CD4-positive, alpha-beta memory T cell (primary cell): ENCODE measurements at regions of chr1 and their contacts with region 1.

Region 1: DNA sequence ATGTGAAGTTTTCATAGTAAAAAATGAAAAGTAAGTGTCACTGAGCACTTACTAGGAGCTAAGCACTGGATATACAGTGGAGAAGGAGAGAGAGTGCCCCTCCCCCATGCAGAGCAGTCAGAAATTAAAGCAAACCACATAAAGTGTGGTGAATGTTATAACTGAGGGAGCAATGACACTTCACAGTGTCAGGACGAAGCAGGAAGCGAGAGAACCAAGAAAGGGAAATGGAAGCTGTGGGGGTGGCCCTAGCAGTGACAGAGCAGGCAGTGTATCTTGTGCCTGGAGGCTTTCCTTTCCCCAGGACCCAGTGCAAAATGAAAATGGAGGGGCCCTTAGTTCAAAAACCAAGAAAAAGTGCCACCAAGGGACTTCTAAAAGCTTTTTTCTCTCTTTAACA is 21.5 kb upstream of the RCAN3 start:
- DNase-seq: peak; percentile 59 to 77 (median 67)
- H3K4me3 ChIP-seq: peak overlapping the region in 1 of 2 donors; percentile 50
- H3K4me3 Mint-ChIP-seq: peak overlapping the region; percentile 66 to 96 (median 86)
- H3K27ac ChIP-seq: peak overlapping the region; percentile 61
- H3K27ac Mint-ChIP-seq: peak overlapping the region; percentile 96 to 99 (median 99)
- H3K4me1 ChIP-seq: peaks cover 62% of the 10 kb centered on the region
- H3K4me1 Mint-ChIP-seq: peaks cover 42 to 72% (median 57%) of the 10 kb centered on the region in 4 donors
- H3K27me3 ChIP-seq: no peaks in the 10 kb centered on the region
- H3K27me3 Mint-ChIP-seq: no peaks in the 10 kb centered on the region

Region 2: DNA sequence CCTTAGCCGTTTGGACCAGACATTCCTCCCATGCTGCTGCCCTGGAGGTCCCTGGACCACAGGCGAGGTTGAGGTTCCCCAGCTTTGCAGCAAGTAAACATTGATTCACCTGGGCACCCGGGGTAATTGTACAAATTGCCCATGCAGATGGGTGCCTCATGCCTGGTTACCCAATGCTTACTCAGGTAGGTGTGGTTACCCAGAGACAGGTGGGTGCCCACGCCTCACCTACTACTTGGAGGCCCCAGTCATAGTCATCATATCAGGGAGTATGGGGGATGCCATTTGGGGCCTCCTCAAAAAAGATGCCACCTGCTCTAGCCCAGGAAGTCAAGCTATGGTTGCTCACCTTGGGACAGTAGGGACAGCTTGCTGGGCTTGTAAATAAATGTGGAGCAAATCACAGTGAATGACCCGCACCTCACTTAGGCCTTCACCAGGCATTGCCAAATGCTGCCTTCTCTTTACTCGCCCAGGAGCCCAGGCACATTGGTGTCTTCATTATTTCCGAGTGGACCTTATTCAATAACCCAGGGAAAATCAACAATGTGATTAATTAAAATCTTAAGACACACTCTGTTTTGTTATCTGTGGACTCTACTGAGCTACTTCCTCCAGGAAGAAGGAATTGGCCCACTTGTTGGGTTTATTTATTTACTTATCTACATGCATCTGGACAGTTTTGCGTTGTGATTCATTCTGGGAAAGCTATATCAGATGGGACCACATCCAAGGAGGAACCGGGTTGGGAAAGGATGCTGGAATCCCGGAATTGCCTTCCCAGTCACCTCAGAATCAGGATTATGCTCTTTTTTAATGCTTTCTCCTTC is 197.6 kb before region 1 on chr1:
- CTCF ChIA-PET with region 1: no interaction called
- POLR2A ChIA-PET with region 1: no interaction called
- intact Hi-C with region 1: no loop called
- DNase-seq: no peak
- H3K4me3 ChIP-seq: no peak overlapping the region
- H3K4me3 Mint-ChIP-seq: no peak overlapping the region
- H3K27ac ChIP-seq: no peak overlapping the region
- H3K27ac Mint-ChIP-seq: no peak overlapping the region
- H3K4me1 ChIP-seq: no peaks in the 10 kb centered on the region
- H3K4me1 Mint-ChIP-seq: no peaks in the 10 kb centered on the region
- H3K27me3 ChIP-seq: no peaks in the 10 kb centered on the region
- H3K27me3 Mint-ChIP-seq: peaks cover 0 to 2% of the 10 kb centered on the region in 2 donors

Region 3: DNA sequence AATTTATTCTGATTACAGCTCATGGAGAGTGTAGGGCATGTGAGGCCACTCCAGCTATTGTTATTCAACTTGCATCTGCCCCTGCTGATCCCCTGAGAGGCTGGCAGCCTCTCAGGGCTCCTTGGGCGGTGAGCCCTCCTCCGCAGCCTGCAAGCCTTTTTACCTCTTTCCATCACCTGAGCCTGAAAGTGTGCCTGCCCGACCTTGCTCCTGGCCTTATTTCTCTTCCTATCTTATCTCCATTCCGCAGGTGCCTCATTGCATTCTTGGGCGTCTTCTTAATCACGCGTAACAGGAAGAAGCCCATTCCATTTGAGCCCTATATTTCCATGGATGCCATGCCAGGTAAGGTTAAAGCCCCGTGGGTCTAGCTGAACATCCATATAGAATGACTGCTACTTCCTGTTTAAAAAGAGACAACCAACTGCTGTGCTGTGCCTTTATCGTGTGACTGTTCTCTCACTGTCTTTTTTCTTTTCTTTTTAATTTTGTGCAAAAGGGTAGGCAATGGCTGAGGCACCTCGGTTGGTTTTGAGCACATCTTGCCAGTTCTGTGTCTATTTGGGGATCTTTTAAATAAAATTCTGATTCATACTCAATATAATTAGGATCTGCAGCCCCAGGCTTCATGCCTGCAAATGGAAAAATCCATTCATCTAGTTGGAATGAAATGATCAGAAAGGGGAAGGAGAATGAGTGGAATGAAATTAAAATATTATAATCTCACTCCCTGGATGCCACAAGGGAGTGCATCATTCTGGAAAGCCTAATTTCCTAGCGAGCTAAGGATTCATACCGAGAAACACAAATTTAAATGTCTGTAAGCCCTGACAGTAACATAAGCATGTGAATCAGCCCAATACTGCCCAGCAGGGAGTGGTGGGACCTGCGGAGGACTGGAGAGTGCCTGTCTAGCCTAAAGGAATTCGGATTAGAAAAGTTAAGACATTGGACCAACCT is 17.0 kb before region 1 on chr1:
- CTCF ChIA-PET with region 1: interaction called, 11 read pairs
- POLR2A ChIA-PET with region 1: interaction called, 19 read pairs
- intact Hi-C with region 1: no loop called
- DNase-seq: no peak
- H3K4me3 ChIP-seq: no peak overlapping the region
- H3K4me3 Mint-ChIP-seq: no peak overlapping the region
- H3K27ac ChIP-seq: no peak overlapping the region
- H3K27ac Mint-ChIP-seq: peak overlapping the region in 6 of 7 donors; percentile 28 to 93 (median 67)
- H3K4me1 ChIP-seq: peaks cover 4% of the 10 kb centered on the region
- H3K4me1 Mint-ChIP-seq: peaks cover 12 to 26% (median 18%) of the 10 kb centered on the region in 4 donors
- H3K27me3 ChIP-seq: no peaks in the 10 kb centered on the region
- H3K27me3 Mint-ChIP-seq: no peaks in the 10 kb centered on the region

Region 4: DNA sequence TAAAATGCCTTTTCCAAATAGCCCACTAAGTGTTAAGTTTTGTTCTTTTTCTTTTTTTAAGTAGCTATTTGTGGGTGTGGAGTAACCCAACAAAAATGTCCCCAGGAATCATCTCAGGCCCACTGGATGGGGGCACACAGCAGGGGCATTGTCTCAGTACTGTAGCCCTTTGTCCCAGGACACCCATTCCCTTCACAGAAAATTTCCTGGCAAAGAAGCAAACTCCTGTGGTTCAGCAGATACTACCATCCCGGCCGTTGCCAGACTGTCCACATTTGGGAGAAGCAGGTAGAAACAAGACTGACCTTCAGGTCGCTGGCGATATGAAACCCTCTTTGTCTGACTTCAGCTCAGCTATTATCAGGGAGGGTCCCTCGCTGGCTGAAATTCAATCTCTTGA is 138.3 kb after region 1 on chr1:
- CTCF ChIA-PET with region 1: no interaction called
- POLR2A ChIA-PET with region 1: no interaction called
- intact Hi-C with region 1: no loop called
- DNase-seq: no peak
- H3K4me3 ChIP-seq: no peak overlapping the region
- H3K4me3 Mint-ChIP-seq: no peak overlapping the region
- H3K27ac ChIP-seq: no peak overlapping the region
- H3K27ac Mint-ChIP-seq: no peak overlapping the region
- H3K4me1 ChIP-seq: no peaks in the 10 kb centered on the region
- H3K4me1 Mint-ChIP-seq: no peaks in the 10 kb centered on the region
- H3K27me3 ChIP-seq: no peaks in the 10 kb centered on the region
- H3K27me3 Mint-ChIP-seq: peaks cover 8 to 20% of the 10 kb centered on the region in 2 donors

Region 5: GRCh38 chr1:24635195-24635843 is 154.2 kb after region 1 on chr1:
- CTCF ChIA-PET with region 1: interaction called, 3 read pairs
- POLR2A ChIA-PET with region 1: no interaction called
- intact Hi-C with region 1: loop called (anchors 5 kb)
- DNase-seq: peak in 4 of 5 donors; percentile 55 to 63 (median 57)
- H3K4me3 ChIP-seq: no peak overlapping the region
- H3K4me3 Mint-ChIP-seq: no peak overlapping the region
- H3K27ac ChIP-seq: no peak overlapping the region
- H3K27ac Mint-ChIP-seq: no peak overlapping the region
- H3K4me1 ChIP-seq: no peaks in the 10 kb centered on the region
- H3K4me1 Mint-ChIP-seq: peaks cover 2 to 11% (median 3%) of the 10 kb centered on the region in 4 donors
- H3K27me3 ChIP-seq: no peaks in the 10 kb centered on the region
- H3K27me3 Mint-ChIP-seq: peaks cover 2 to 5% of the 10 kb centered on the region in 2 donors